Activated naive CD4-positive, alpha-beta T cell treated with anti-CD3 and anti-CD28 coated beads, Interleukin-2, amount 10 ng/mL, durations not matched to agents 7 days and 5 days (primary cell): ENCODE measurements at regions of chr13 and their contacts with region 1.

Region 1: GRCh38 chr13:30376426-30377311 is 45.6 kb upstream of the UBE2L5 start:
- DNase-seq: peak; percentile 85
- H3K4me3 Mint-ChIP-seq: peak overlapping the region; percentile 82
- H3K27ac Mint-ChIP-seq: peak overlapping the region; percentile 97
- H3K4me1 Mint-ChIP-seq: peaks cover 90% of the 10 kb centered on the region
- H3K27me3 Mint-ChIP-seq: no peaks in the 10 kb centered on the region

Region 2: GRCh38 chr13:30364876-30365275 is 11.8 kb before region 1 on chr13:
- CTCF ChIA-PET with region 1: no interaction called
- DNase-seq: no peak
- H3K4me3 Mint-ChIP-seq: no peak overlapping the region
- H3K27ac Mint-ChIP-seq: no peak overlapping the region
- H3K4me1 Mint-ChIP-seq: peaks cover 25% of the 10 kb centered on the region
- H3K27me3 Mint-ChIP-seq: no peaks in the 10 kb centered on the region

Region 3: GRCh38 chr13:30388406-30389283 is 12.0 kb after region 1 on chr13:
- CTCF ChIA-PET with region 1: interaction called, 31 read pairs
- DNase-seq: no peak
- H3K4me3 Mint-ChIP-seq: peak overlapping the region; percentile 53
- H3K27ac Mint-ChIP-seq: peak overlapping the region; percentile 93
- H3K4me1 Mint-ChIP-seq: peaks cover 71% of the 10 kb centered on the region
- H3K27me3 Mint-ChIP-seq: no peaks in the 10 kb centered on the region

Region 4: DNA sequence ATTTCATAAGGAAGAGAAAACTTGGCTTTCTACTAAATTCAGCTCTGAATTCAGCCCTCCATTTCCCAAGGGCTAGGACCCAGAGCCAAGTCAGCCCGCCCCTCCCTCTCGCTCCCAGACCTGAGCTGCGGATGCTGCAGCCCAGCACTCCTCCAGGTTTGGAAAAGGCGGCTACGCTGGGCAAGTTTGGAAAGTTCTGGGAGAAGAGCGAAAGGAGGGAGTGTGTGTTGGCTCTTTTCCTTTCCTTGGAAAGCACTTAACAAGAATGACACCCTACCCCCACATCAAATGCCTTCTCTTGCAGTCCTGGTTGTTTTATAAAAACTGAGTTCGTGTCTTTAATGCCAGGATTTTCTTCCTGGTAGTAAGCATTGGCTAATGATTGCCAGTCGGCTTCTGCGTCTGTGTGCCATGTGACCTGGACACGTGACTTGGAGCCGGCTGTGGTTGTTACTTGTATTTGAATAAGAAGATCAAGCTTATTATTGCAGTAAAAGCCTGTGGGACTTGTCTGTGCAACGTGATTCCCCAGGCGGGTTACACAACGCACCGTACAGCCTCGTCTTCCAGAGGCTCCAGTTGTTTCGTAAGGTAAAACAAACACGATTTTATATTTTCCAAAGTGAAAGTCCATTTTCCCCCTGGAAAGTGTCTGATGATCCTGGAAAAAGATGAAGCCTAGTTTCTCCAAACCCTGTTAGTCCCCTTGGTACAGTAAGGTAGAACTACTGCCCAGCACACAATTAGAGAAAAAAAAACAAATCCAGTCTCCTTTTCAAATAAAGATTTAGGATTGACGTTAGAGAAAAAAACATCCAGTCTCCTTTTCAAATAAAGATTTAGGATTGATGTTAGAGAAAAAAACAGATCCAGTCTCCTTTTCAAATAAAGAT is 18.8 kb after region 1 on chr13:
- CTCF ChIA-PET with region 1: interaction called, 29 read pairs
- DNase-seq: peak; percentile 85
- H3K4me3 Mint-ChIP-seq: peak overlapping the region; percentile 76
- H3K27ac Mint-ChIP-seq: peak overlapping the region; percentile 97
- H3K4me1 Mint-ChIP-seq: peaks cover 52% of the 10 kb centered on the region
- H3K27me3 Mint-ChIP-seq: no peaks in the 10 kb centered on the region

Region 5: DNA sequence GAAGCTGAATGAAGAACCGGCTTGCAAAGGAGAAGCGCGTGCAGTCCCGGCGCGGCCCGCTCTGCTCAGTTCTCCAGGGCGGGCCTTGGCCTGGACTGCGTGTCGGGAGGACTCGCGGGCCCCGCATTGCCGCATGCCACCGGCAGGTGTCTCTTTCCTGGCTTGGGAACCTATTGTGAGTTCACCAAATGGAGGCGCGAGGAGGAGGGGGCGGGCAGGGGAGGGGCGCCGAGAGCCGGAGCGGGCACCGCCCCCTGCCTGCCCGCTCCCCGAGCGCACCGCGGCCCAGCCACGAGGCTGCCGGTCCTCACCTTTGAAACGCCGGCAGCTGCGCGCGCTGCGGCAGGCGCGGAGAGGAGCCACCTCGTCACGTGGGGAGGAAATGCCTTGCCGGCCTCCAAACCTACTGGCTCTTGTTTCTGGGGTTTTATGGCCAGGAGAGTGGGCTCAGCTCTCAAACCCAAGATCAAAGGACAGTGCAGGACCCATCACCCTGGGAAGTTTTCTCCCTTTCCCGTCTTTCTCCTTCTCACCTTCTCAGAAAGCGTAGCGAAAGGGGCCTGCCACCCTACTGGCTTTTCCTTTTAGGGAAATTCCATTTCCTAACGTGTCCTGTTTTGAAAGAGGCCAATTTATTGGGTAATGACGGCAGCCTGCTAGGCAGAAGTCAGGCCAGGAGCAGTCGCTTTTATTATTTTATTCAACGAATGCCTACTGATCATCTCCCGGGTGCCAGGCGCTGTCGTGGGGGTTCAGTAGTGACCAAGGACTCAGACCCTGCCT is 31.8 kb after region 1 on chr13:
- CTCF ChIA-PET with region 1: interaction called, 18 read pairs
- DNase-seq: peak; percentile 94
- H3K4me3 Mint-ChIP-seq: peak overlapping the region; percentile 39
- H3K27ac Mint-ChIP-seq: peak overlapping the region; percentile 68
- H3K4me1 Mint-ChIP-seq: peaks cover 37% of the 10 kb centered on the region
- H3K27me3 Mint-ChIP-seq: peaks cover 16% of the 10 kb centered on the region

Region 6: DNA sequence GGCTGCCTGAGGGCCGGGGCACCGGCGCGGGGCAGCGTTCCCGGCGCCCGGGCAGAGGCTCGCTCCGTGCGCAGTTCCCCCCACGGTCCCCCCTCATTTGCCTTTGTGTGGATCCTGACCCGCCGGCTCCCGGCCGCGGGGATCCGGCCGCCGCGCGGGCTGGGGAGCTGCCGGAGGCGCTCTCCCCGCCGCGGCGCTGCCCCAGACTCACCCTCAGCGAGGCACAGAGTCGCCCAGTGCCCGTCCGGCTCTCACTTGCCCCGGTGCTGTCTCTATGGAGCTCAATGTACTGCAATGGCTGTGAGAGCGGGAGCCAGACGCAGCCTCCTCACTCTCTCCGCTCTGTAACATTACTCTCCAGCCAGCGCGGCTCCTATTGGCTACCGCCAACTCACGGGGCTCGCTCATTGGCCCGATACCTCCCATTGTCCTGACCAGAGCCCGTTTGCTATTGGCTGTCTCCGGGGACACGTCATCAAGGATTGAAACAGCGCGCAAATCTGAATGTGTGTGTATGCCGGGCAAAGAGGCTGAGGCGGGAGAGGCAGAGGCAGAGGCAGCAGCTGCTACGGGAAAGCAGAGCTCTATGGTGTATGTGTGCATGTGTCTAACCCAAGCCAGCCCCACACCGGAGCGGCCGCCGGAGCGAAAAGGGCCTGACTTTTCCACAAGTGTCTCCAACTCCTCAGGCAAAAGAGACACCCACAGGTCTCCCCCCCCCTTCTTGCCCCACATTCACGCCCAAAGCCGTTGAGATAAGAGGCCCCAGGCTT is 89.1 kb after region 1 on chr13 and contains the start of gene HMGB1:
- CTCF ChIA-PET with region 1: interaction called, 10 read pairs
- DNase-seq: peak; percentile 99
- H3K4me3 Mint-ChIP-seq: peak within 1 kb of the TSS; percentile 88
- H3K27ac Mint-ChIP-seq: peak within 1 kb of the TSS; percentile 99
- H3K4me1 Mint-ChIP-seq: peaks cover 30% of the 10 kb centered on the region
- H3K27me3 Mint-ChIP-seq: peaks cover 5% of the 10 kb centered on the region